ENCODE measurements at regions of chr1 and their contacts with region 1.

Region 1: GRCh38 chr1:243946946-243947345 is 96.9 kb upstream of the AKT3 start:
- DNase-seq: no peak
- ATAC-seq: no peak
- H3K4me3 ChIP-seq: no peak overlapping the region
- H3K27ac ChIP-seq: no peak overlapping the region
- H3K4me1 ChIP-seq: no peaks in the 10 kb centered on the region; the same call in 1 of the 2 replicates
- H3K27me3 ChIP-seq: no peaks in the 10 kb centered on the region; the same call in 1 of the 2 replicates
- CTCF ChIP-seq: peak; percentile 43
- POLR2A ChIP-seq: no peak
- RAD21 ChIP-seq: peak; percentile 55

Region 2: DNA sequence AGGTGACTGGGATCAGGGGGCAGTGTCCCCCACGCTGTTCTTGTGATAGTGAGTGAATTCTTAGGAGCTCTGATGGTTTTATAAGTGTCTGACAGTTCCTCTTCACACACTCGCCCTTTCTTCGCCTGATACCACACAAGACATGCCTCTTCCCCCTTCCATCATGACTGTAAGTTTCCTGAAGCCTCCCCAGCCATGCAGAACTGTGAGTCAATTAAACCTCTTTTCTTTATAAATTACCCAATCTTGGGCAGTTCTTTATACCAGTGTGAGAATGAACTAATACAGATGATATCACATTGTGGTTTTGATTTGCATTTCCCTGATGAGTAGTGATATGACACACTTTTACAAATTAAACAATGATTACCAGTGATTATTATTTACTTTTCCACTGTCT is 326.9 kb before region 1 on chr1:
- CTCF ChIA-PET with region 1: no interaction called
- POLR2A ChIA-PET with region 1: interaction called, 10 read pairs
- dilution Hi-C with region 1: no loop called
- in situ Hi-C with region 1: no loop called
- intact Hi-C with region 1: no loop called
- DNase-seq: no peak
- ATAC-seq: no peak
- H3K4me3 ChIP-seq: no peak overlapping the region
- H3K27ac ChIP-seq: no peak overlapping the region
- H3K4me1 ChIP-seq: peaks cover 4% of the 10 kb centered on the region; the same call in 1 of the 2 replicates
- H3K27me3 ChIP-seq: no peaks in the 10 kb centered on the region
- CTCF ChIP-seq: no peak
- POLR2A ChIP-seq: no peak
- RAD21 ChIP-seq: no peak

Region 3: GRCh38 chr1:244063498-244063897 is 116.6 kb after region 1 on chr1:
- CTCF ChIA-PET with region 1: no interaction called
- POLR2A ChIA-PET with region 1: no interaction called
- dilution Hi-C with region 1: no loop called
- in situ Hi-C with region 1: no loop called
- intact Hi-C with region 1: no loop called
- DNase-seq: no peak
- ATAC-seq: no peak
- H3K4me3 ChIP-seq: no peak overlapping the region
- H3K27ac ChIP-seq: no peak overlapping the region
- H3K4me1 ChIP-seq: peaks cover 7% of the 10 kb centered on the region
- H3K27me3 ChIP-seq: no peaks in the 10 kb centered on the region
- CTCF ChIP-seq: no peak
- POLR2A ChIP-seq: no peak
- RAD21 ChIP-seq: no peak